Aorta (tissue), 5 donors: ENCODE measurements at regions of chr5 and their contacts with region 1.

Region 1: GRCh38 chr5:153900703-153901395 is 137.9 kb downstream of the FAM114A2 start:
- DNase-seq: peak in 1 of 2 donors; percentile 41
- ATAC-seq: peak; percentile 64
- H3K4me3 ChIP-seq: no peak overlapping the region
- H3K27ac ChIP-seq: peak overlapping the region in 1 of 2 donors; percentile 29
- H3K4me1 ChIP-seq: peaks cover 5 to 15% of the 10 kb centered on the region in 2 donors
- H3K27me3 ChIP-seq: no peaks in the 10 kb centered on the region

Region 2: GRCh38 chr5:153629027-153629895 is 271.6 kb before region 1 on chr5:
- intact Hi-C with region 1: loop called in 1 of 2 experiments (anchors 10 kb)
- DNase-seq: peak; percentile 82 to 85
- ATAC-seq: peak; percentile 82
- H3K4me3 ChIP-seq: no peak overlapping the region
- H3K27ac ChIP-seq: peak overlapping the region in 1 of 2 donors; percentile 78
- H3K4me1 ChIP-seq: peaks cover 0 to 9% of the 10 kb centered on the region in 2 donors
- H3K27me3 ChIP-seq: no peaks in the 10 kb centered on the region

Region 3: GRCh38 chr5:153860195-153860886 is 40.5 kb before region 1 on chr5:
- intact Hi-C with region 1: no loop called
- DNase-seq: no peak
- ATAC-seq: no peak
- H3K4me3 ChIP-seq: no peak overlapping the region
- H3K27ac ChIP-seq: no peak overlapping the region
- H3K4me1 ChIP-seq: no peaks in the 10 kb centered on the region
- H3K27me3 ChIP-seq: no peaks in the 10 kb centered on the region

Region 4: DNA sequence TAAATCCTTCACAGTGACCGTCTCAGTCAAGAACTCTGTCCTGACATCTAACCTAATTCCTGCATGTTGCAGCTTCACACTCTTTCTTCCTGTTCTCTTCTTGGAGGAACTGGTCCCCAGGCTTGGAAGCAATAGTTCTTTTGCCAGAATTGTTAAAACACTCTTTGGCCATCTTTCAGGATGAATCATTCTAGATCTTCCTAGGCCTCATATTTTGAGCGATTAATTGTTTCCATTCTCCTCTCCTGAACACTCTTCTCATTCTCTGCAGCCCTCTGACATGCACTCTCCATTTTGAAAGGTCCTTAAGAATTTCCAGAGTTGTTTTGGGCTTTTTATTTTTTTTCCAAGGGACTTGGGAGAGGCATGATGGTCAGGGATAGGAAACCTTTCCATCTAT is 52.0 kb after region 1 on chr5:
- intact Hi-C with region 1: loop called in 1 of 2 experiments (anchors 5 kb)
- DNase-seq: no peak
- ATAC-seq: peak; percentile 47
- H3K4me3 ChIP-seq: no peak overlapping the region
- H3K27ac ChIP-seq: peak overlapping the region in 1 of 2 donors; percentile 33
- H3K4me1 ChIP-seq: peaks cover 3% of the 10 kb centered on the region in 2 donors
- H3K27me3 ChIP-seq: no peaks in the 10 kb centered on the region